ENCODE measurements at regions of chr17 and their contacts with region 1.

Region 1: DNA sequence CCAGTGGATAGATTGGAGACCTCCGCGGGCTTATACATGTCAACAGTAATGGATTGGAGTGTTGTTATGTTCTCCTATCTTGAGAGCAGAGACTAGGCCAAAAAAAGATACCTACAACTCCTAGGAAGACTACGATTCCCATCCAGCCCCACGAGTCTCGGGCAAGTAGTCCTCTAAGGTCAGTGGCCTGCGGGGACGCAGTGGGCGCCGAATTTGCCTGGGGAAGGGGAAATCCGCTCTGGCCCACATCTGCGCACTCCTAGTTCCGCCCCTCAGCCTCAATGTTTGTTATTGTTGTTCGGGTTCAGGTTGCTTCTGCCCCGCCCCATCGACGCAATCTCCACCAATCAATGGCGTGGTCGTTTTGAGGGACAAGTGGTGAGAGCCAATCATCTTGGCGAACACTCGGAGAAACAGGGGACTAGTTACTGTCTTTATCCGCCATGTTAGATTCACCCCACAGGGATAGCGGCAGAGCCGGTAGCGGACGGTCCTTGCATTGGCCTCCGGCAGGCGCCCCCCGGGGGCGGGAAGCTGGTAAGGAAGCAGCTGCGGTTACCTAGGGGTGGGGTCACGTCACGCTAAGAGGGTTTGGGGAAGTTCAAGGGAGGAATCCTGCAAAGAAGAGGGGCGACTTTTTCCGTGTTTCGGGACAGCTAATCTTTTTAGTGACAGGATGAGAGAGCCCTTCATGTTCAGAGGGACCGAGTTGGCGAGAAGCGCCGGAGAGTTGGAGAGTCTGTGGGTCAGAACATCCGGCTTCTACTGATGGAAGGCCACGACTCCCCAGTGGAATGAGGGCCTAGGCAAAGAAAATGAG is at the start of gene NBR1:
- DNase-seq: peak; percentile 98
- ATAC-seq: peak; percentile 88
- H3K4me3 Mint-ChIP-seq: no peak within 1 kb of the TSS
- H3K27ac Mint-ChIP-seq: no peak within 1 kb of the TSS
- H3K4me1 Mint-ChIP-seq: peaks cover 35% of the 10 kb centered on the region
- H3K27me3 Mint-ChIP-seq: no peaks in the 10 kb centered on the region
- total RNA-seq, gene NBR1: 40.9 to 41.3 TPM

Region 2: DNA sequence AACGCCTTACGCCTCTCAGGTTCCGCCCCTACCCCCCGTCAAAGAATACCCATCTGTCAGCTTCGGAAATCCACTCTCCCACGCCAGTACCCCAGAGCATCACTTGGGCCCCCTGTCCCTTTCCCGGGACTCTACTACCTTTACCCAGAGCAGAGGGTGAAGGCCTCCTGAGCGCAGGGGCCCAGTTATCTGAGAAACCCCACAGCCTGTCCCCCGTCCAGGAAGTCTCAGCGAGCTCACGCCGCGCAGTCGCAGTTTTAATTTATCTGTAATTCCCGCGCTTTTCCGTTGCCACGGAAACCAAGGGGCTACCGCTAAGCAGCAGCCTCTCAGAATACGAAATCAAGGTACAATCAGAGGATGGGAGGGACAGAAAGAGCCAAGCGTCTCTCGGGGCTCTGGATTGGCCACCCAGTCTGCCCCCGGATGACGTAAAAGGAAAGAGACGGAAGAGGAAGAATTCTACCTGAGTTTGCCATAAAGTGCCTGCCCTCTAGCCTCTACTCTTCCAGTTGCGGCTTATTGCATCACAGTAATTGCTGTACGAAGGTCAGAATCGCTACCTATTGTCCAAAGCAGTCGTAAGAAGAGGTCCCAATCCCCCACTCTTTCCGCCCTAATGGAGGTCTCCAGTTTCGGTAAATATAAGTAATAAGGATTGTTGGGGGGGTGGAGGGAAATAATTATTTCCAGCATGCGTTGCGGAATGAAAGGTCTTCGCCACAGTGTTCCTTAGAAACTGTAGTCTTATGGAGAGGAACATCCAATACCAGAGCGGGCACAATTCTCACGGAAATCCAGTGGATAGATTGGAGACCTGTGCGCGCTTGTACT is 45.6 kb before region 1 on chr17 and contains the start of gene BRCA1:
- CTCF ChIA-PET with region 1: interaction called, 7 read pairs
- POLR2A ChIA-PET with region 1: interaction called, 33 read pairs
- DNase-seq: peak; percentile 98
- ATAC-seq: peak; percentile 98
- H3K4me3 Mint-ChIP-seq: peak within 1 kb of the TSS; percentile 99
- H3K27ac Mint-ChIP-seq: peak within 1 kb of the TSS; percentile 98
- H3K4me1 Mint-ChIP-seq: peaks cover 39% of the 10 kb centered on the region
- H3K27me3 Mint-ChIP-seq: no peaks in the 10 kb centered on the region
- total RNA-seq, gene BRCA1: 77.2 to 85.3 TPM

Region 3: DNA sequence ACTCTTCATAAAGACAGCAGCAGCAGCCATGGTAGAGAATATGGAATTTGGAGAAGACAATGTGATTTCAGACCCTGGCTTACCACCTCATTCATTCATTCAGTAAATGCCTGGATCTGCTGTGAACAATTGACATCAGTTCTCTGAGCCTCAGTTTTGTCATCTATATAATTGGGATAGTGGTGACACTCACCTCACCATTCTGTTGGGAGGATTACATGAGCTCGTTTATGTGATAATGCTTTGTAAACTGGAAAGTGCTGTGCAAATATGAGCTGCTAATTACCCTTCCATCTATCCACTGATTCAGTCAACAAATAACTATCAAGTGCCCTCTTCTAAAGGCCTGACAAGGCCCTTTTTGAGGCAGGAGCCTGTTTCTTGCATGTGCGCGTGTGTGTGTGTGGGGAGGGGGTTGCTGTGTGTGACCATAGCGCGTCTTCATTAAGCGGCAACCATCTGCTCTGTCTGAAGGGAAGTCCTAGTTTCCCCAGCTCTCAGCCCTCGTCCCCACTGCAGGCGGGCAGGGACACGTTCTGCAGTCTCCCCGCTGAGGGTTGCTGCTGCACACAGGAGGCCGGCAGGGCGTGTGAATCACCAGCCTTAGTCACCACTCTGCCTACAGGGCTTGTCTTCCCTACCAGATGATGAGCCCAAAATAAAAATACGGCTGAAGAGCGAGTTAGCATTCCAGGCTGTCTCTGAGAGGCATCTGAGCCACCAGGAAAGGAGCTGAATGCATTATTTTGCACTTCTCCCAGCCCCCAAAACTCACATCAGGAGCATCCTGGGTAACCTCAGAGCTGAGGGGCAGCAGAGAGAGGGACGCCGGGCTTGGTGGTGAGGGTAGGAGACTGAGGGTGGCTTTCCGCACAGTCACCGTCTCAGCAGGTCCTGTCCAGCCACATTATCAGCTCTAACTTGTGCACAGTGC is 247.7 kb after region 1 on chr17:
- CTCF ChIA-PET with region 1: no interaction called
- POLR2A ChIA-PET with region 1: no interaction called
- DNase-seq: no peak
- ATAC-seq: no peak
- H3K4me3 Mint-ChIP-seq: no peak overlapping the region
- H3K27ac Mint-ChIP-seq: no peak overlapping the region
- H3K4me1 Mint-ChIP-seq: no peaks in the 10 kb centered on the region
- H3K27me3 Mint-ChIP-seq: peaks cover 28% of the 10 kb centered on the region

Region 4: DNA sequence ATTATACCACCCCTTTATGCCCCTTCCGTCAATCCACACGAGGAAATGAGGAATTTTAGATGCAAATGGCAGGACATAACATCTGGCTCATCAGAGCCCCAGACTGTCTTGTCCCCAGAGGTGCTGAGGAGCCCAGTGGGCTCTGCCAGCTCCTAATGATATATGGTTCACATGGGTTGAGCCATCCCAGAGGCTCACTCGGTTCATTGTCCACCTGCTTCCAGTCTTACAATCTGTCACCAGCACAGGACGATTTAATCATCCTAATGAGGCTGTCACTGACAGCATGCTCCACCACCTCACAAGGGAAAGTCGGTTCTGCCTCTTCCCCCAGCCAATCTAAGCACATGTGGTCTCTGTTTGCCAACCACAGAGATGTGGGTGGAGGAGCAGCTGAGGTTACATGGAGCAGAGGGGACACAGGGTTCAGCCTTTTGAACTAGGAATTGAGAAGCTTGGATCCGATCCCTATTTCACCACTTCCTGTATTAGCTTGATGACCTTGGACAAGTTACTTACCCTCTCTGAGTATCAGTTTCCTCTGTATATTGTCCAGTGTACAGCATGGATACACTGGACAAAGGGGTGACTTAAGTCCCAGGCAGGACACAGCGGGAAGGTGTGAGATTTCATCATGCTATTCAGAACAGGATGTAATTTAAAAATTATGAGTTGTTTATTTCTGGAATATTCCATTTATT is 285.8 kb after region 1 on chr17:
- CTCF ChIA-PET with region 1: no interaction called
- POLR2A ChIA-PET with region 1: no interaction called
- DNase-seq: no peak
- ATAC-seq: no peak
- H3K4me3 Mint-ChIP-seq: no peak overlapping the region
- H3K27ac Mint-ChIP-seq: no peak overlapping the region
- H3K4me1 Mint-ChIP-seq: peaks cover 8% of the 10 kb centered on the region
- H3K27me3 Mint-ChIP-seq: peaks cover 11% of the 10 kb centered on the region